ENCODE measurements at regions of chr17 and their contacts with region 1.

Region 1: DNA sequence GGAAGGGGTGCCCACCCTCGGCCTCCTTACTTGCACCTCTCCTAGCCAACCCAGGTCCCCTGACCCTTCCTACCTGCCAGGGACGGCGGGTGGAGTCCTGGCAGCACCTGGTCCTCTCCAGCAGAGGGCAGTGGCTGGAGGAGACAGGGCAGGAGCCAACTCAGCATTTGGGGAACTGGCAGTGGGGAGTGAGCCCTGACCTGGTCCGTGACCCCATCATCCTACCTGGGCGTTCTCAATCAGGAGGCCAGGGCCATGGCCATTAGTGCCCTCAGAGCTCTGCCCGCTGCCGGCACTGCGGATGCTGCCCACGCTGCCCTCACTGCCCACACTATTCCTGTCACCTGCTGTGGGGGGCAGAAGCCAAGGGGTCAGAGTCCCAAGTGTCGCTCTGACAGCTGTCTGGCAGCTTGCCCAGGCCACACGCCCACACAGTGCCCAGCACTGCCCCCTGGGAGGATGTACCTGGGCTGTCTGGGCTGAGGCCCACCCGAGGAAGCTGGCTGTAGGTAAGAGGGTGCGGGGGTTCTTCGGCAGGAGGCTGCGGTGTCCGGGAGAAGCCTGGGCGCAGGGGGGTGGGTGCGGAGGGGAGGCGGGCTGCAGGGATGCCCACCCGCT is 10.9 kb downstream of the CASKIN2 start:
- DNase-seq: peak; percentile 73
- ATAC-seq: peak; percentile 90
- H3K4me3 ChIP-seq: no peak overlapping the region
- H3K4me3 Mint-ChIP-seq: no peak overlapping the region
- H3K27ac ChIP-seq: no peak overlapping the region
- H3K27ac Mint-ChIP-seq: no peak overlapping the region
- H3K4me1 ChIP-seq: peaks cover 0 to 7% of the 10 kb centered on the region in 2 donors
- H3K4me1 Mint-ChIP-seq: no peaks in the 10 kb centered on the region
- H3K27me3 ChIP-seq: no peaks in the 10 kb centered on the region
- H3K27me3 Mint-ChIP-seq: no peaks in the 10 kb centered on the region
- CTCF ChIP-seq: peak; percentile 67

Region 2: DNA sequence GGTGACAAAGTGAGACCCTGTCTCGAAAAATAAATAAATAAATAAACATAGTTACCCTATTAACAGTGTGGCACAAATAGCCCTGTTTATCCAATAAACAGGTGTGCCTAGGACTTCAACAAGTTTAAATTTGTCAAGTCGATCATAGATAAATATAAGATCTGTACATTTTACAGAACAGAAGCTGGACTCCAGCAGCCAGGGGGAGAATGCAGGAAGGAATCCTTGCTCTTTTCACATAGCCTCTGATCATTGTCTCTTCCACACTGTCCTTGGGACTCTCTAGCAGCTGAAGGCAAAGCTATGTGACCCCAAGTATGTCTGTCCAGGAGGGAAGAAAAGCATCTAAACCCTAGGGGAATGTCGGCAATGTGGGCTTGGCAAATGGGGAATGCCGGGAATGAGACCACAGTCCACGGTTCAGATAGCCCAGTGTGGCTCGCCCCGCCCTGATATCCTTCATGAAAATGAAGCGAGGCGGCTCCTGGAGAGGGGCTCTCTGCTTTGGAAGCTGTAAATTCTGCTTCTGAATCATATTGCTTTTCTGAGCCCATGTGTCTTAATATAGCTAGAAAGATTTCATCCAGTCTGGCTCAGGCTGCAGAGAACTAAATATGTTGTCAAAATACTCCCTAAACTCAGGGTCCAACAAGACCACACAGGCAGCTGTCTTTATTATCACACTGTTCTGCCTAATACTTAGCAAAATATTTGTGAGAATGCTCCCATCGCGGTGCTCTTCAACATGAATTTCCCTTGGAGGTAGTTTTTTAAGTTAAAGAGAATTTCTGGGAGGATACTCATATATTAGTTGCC is 74.1 kb before region 1 on chr17:
- CTCF ChIA-PET with region 1: no interaction called
- POLR2A ChIA-PET with region 1: no interaction called
- intact Hi-C with region 1: loop called (anchors 2 kb)
- DNase-seq: no peak
- ATAC-seq: no peak
- H3K4me3 ChIP-seq: no peak overlapping the region
- H3K4me3 Mint-ChIP-seq: no peak overlapping the region
- H3K27ac ChIP-seq: no peak overlapping the region
- H3K27ac Mint-ChIP-seq: no peak overlapping the region
- H3K4me1 ChIP-seq: peaks cover 6 to 7% of the 10 kb centered on the region in 2 donors
- H3K4me1 Mint-ChIP-seq: peaks cover 11% of the 10 kb centered on the region
- H3K27me3 ChIP-seq: peaks cover 0 to 4% (median 0%) of the 10 kb centered on the region in 4 experiments
- H3K27me3 Mint-ChIP-seq: peaks cover 15% of the 10 kb centered on the region
- CTCF ChIP-seq: no peak

Measured in B cell (primary cell).